ENCODE measurements at regions of chr20 and their contacts with region 1.

Region 1: DNA sequence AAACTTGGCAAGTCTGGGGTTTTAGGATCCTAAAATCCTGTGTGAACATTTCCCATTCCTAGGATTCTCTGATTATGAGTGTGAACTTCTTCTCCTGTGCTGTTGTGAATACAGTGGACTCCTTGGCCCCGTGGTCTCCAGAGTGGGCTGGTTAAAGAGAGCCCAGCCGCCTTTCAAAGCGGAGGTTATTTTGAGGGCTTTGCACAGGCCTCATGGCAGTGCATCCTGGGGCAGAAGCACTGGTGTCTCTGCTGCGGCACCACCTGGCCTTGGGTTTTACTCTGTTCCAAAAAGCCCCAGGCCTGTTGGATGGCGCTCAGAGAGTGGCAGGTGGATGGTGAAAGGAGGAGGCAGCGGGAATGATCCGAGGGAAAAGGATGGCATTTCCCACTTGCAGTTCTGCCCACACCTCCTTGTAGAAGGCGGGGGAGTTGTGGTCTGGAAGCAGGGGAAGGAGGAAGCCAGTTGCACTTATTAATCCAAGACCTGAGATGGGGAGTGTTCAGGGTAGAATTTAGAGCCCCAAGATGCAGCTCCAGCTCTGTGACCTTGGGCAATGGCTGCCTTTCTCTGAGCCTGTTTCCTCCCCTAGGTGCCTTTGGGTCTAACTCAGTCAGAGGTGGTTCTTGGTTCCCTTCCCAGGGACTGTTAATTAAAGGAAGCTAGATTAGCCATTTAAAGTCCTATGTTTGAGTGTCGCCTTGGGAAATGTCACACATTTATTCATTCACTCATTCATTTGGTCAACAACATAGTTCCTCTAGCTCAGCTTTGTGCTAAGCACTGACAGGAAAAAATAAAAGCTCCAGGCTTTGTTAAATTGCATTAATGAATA is 22.4 kb downstream of the MMP24 start:
- DNase-seq: no peak
- ATAC-seq: no peak
- H3K4me3 ChIP-seq: no peak overlapping the region
- H3K27ac ChIP-seq: no peak overlapping the region
- H3K4me1 ChIP-seq: peaks cover 0 to 2% of the 10 kb centered on the region in 2 experiments; a peak in 2 of 5 replicates
- H3K27me3 ChIP-seq: peaks cover 13 to 33% of the 10 kb centered on the region in 2 experiments; a peak in 4 of 5 replicates
- CTCF ChIP-seq: no peak
- EP300 ChIP-seq: no peak
- POLR2A ChIP-seq: no peak
- RAD21 ChIP-seq: no peak

Region 2: GRCh38 chr20:34850969-34851368 is 397.9 kb before region 1 on chr20:
- CTCF ChIA-PET with region 1: no interaction called
- POLR2A ChIA-PET with region 1: no interaction called
- in situ Hi-C with region 1: loop called (anchors 10 kb)
- intact Hi-C with region 1: no loop called
- DNase-seq: no peak
- ATAC-seq: no peak
- H3K4me3 ChIP-seq: no peak overlapping the region
- H3K27ac ChIP-seq: no peak overlapping the region
- H3K4me1 ChIP-seq: peaks cover 2 to 6% of the 10 kb centered on the region in 2 experiments; a peak in 2 of 5 replicates
- H3K27me3 ChIP-seq: no peaks in the 10 kb centered on the region
- CTCF ChIP-seq: no peak
- EP300 ChIP-seq: no peak
- POLR2A ChIP-seq: no peak
- RAD21 ChIP-seq: no peak

Region 3: GRCh38 chr20:35092524-35093266 is 156.2 kb before region 1 on chr20 and contains the start of gene TRPC4AP:
- CTCF ChIA-PET with region 1: no interaction called
- POLR2A ChIA-PET with region 1: no interaction called
- in situ Hi-C with region 1: no loop called
- intact Hi-C with region 1: no loop called
- DNase-seq: peak; percentile 88 to 94 (median 88)
- ATAC-seq: peak; percentile 92
- H3K4me3 ChIP-seq: peak within 1 kb of the TSS; percentile 92
- H3K27ac ChIP-seq: peak within 1 kb of the TSS; percentile 93
- H3K4me1 ChIP-seq: peaks cover 15 to 18% of the 10 kb centered on the region in 2 experiments
- H3K27me3 ChIP-seq: no peaks in the 10 kb centered on the region
- CTCF ChIP-seq: peak; percentile 91 to 98 (median 96)
- EP300 ChIP-seq: peak; percentile 55
- POLR2A ChIP-seq: peak; percentile 88
- RAD21 ChIP-seq: peak; percentile 19 to 41; a peak in 1 of 4 replicates
- polyA plus RNA-seq, gene TRPC4AP: 2.3 to 3.6 TPM

Region 4: DNA sequence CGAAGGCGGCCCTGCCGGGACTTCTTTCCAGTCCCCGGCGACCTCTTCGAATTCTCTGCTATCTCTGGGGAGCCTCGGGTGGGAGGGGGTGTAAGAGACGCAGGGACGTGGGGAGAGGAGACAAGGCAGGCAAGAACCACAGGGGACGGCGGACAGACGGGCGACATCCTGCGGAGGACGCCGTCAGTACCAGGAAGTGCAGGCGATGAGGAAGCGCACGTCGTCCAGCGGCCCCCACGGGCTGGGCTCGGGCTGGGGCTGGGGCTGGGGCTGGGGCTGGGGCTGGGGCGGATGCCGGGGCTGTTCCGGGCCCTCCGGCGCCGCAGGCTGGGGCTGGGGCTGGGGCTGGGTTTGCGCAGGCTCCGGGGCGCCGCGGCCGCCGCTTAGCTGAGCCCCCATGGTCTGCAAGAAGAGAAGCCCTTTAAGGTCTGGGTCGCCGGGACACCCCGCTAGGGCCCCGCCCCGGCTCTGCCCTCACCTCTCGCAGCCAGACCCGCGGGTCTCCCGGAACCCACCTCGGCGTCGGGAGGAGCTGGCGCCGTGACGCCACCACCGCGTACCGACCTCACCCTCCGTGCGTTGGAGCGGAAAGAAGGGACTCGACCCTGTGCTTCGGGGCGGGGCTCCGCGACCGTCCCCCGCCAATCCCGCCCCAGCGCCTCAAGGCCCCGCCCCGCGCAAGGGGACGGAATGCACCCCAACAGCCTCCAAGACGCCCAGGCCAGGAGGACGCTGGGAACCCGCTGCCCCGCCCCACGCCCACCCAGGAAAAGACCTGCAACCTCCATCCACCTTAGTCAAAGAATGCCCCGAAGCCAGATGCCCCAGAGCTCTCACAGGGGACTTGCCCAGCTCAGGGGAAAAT is 28.9 kb after region 1 on chr20 and contains the start of gene MMP24OS:
- CTCF ChIA-PET with region 1: no interaction called
- POLR2A ChIA-PET with region 1: no interaction called
- in situ Hi-C with region 1: no loop called
- intact Hi-C with region 1: no loop called
- DNase-seq: peak; percentile 85 to 90 (median 87)
- ATAC-seq: peak; percentile 95
- H3K4me3 ChIP-seq: peak within 1 kb of the TSS; percentile 66
- H3K27ac ChIP-seq: peak within 1 kb of the TSS; percentile 82
- H3K4me1 ChIP-seq: peaks cover 8 to 39% of the 10 kb centered on the region in 2 experiments; a peak in 3 of 5 replicates
- H3K27me3 ChIP-seq: no peaks in the 10 kb centered on the region
- CTCF ChIP-seq: peak; percentile 35 to 56 (median 55); a peak in 5 of 6 replicates
- EP300 ChIP-seq: no peak
- POLR2A ChIP-seq: peak; percentile 85
- RAD21 ChIP-seq: no peak
- polyA plus RNA-seq, gene MMP24OS: 0.92 to 1.6 TPM

Measured in K562 (cell line).